Naive thymus-derived CD4-positive, alpha-beta T cell (primary cell): ENCODE measurements at regions of chr16 and their contacts with region 1.

Region 1: DNA sequence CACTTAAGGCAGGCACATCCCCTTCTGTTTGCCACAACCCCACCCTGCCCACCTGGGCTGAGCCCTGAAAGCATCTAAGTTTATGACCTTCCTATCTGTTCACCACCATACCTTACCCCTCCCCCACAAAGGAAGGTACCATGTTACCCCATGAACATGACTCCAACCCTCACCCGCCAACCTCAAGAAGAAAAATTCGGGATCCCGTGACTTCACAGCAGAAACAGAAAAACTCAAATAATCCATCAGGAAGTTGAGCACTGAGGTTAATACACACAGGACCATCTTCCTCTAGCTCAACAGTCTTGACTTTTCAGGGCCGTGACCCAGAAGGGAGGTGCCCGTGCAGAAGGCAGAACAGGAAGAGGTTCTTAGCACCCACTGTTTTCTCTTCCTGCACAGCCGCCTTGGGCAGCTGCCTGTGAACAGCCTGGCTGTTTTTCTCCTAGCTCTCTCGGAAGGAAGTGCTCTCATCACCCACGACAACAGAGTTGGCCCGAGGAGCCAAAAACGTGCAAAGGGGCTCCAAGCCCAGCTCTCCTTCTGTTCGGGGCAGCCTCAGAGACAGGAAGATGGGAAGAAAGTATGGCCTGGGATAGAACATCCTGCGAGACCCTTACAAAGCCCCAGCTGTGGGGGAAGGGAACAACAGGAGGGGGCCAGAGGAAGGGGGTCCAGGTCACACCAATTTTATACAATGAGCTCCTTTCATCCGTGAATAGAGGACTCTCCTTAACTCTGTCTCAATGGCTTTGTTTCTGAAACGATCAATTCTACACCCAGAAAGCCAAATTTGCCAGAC is 101.1 kb downstream of the XYLT1 start:
- DNase-seq: peak; percentile 45 to 88 (median 84)
- ATAC-seq: peak; percentile 91
- H3K4me3 ChIP-seq: peak overlapping the region; percentile 65
- H3K4me3 Mint-ChIP-seq: peak overlapping the region; percentile 77 to 96 (median 92)
- H3K27ac ChIP-seq: peak overlapping the region; percentile 70
- H3K27ac Mint-ChIP-seq: peak overlapping the region; percentile 96 to 100 (median 99)
- H3K4me1 ChIP-seq: peaks cover 78 to 81% of the 10 kb centered on the region in 2 donors
- H3K4me1 Mint-ChIP-seq: peaks cover 64 to 99% (median 92%) of the 10 kb centered on the region in 7 donors
- H3K27me3 ChIP-seq: no peaks in the 10 kb centered on the region
- H3K27me3 Mint-ChIP-seq: no peaks in the 10 kb centered on the region

Region 2: GRCh38 chr16:16861546-16861945 is 508.1 kb before region 1 on chr16:
- CTCF ChIA-PET with region 1: no interaction called
- POLR2A ChIA-PET with region 1: no interaction called
- intact Hi-C with region 1: loop called in 1 of 2 experiments (anchors 10 kb)
- DNase-seq: peak; percentile 15 to 63 (median 50)
- ATAC-seq: no peak
- H3K4me3 ChIP-seq: no peak overlapping the region
- H3K4me3 Mint-ChIP-seq: no peak overlapping the region
- H3K27ac ChIP-seq: no peak overlapping the region
- H3K27ac Mint-ChIP-seq: peak overlapping the region in 1 of 9 donors; percentile 13
- H3K4me1 ChIP-seq: no peaks in the 10 kb centered on the region
- H3K4me1 Mint-ChIP-seq: peaks cover 0 to 3% (median 0%) of the 10 kb centered on the region in 7 donors
- H3K27me3 ChIP-seq: no peaks in the 10 kb centered on the region
- H3K27me3 Mint-ChIP-seq: peaks cover 2 to 17% (median 10%) of the 10 kb centered on the region in 5 donors

Region 3: DNA sequence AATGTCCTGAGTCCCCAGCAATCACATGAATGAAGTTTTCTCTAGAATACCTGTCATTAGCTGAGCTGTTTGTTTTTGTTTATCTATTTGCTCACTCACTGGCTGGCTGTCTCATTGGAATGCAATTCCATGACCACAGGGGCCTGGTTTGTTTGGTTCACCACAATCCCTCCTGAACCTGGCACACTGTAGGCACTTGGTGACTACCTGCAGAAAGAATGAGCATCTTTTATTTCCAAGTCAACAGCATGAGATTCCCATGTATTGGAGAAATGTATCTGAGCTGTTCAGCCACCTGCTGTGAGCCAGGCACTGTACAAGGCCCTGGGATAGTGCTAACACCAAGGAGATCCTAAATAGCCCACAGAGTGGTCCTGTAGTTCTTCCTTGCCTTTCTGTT is 244.0 kb before region 1 on chr16:
- CTCF ChIA-PET with region 1: no interaction called
- POLR2A ChIA-PET with region 1: no interaction called
- intact Hi-C with region 1: no loop called
- DNase-seq: no peak
- ATAC-seq: no peak
- H3K4me3 ChIP-seq: no peak overlapping the region
- H3K4me3 Mint-ChIP-seq: no peak overlapping the region
- H3K27ac ChIP-seq: no peak overlapping the region
- H3K27ac Mint-ChIP-seq: no peak overlapping the region
- H3K4me1 ChIP-seq: no peaks in the 10 kb centered on the region
- H3K4me1 Mint-ChIP-seq: peaks cover 2 to 16% (median 4%) of the 10 kb centered on the region in 7 donors
- H3K27me3 ChIP-seq: no peaks in the 10 kb centered on the region
- H3K27me3 Mint-ChIP-seq: no peaks in the 10 kb centered on the region

Region 4: GRCh38 chr16:17277977-17278381 is 91.6 kb before region 1 on chr16:
- CTCF ChIA-PET with region 1: interaction called, 5 read pairs
- POLR2A ChIA-PET with region 1: interaction called, 3 read pairs
- intact Hi-C with region 1: loop called in 1 of 2 experiments (anchors 5 kb)
- DNase-seq: peak in 1 of 9 donors; percentile 11
- ATAC-seq: peak; percentile 34
- H3K4me3 ChIP-seq: no peak overlapping the region
- H3K4me3 Mint-ChIP-seq: no peak overlapping the region
- H3K27ac ChIP-seq: no peak overlapping the region
- H3K27ac Mint-ChIP-seq: peak overlapping the region in 2 of 9 donors; percentile 10 to 33
- H3K4me1 ChIP-seq: peaks cover 0 to 23% of the 10 kb centered on the region in 2 donors
- H3K4me1 Mint-ChIP-seq: peaks cover 29 to 71% (median 57%) of the 10 kb centered on the region in 7 donors
- H3K27me3 ChIP-seq: no peaks in the 10 kb centered on the region
- H3K27me3 Mint-ChIP-seq: no peaks in the 10 kb centered on the region

Region 5: GRCh38 chr16:17382949-17383863 is 13.6 kb after region 1 on chr16:
- CTCF ChIA-PET with region 1: interaction called, 5 read pairs
- POLR2A ChIA-PET with region 1: interaction called, 14 read pairs
- intact Hi-C with region 1: loop called in 1 of 2 experiments (anchors 1 kb)
- DNase-seq: no peak
- ATAC-seq: peak; percentile 28
- H3K4me3 ChIP-seq: no peak overlapping the region
- H3K4me3 Mint-ChIP-seq: peak overlapping the region; percentile 30 to 81 (median 59)
- H3K27ac ChIP-seq: no peak overlapping the region
- H3K27ac Mint-ChIP-seq: peak overlapping the region in 7 of 9 donors; percentile 29 to 86 (median 71)
- H3K4me1 ChIP-seq: peaks cover 18 to 37% of the 10 kb centered on the region in 2 donors
- H3K4me1 Mint-ChIP-seq: peaks cover 48 to 89% (median 81%) of the 10 kb centered on the region in 7 donors
- H3K27me3 ChIP-seq: no peaks in the 10 kb centered on the region
- H3K27me3 Mint-ChIP-seq: no peaks in the 10 kb centered on the region

Region 6: GRCh38 chr16:17529982-17530765 is 160.6 kb after region 1 on chr16:
- CTCF ChIA-PET with region 1: interaction called, 5 read pairs
- POLR2A ChIA-PET with region 1: interaction called, 4 read pairs
- intact Hi-C with region 1: loop called (anchors 2 kb)
- DNase-seq: peak; percentile 11 to 71 (median 54)
- ATAC-seq: peak; percentile 85
- H3K4me3 ChIP-seq: peak overlapping the region; percentile 97
- H3K4me3 Mint-ChIP-seq: peak overlapping the region; percentile 78 to 95 (median 89)
- H3K27ac ChIP-seq: peak overlapping the region; percentile 52
- H3K27ac Mint-ChIP-seq: peak overlapping the region; percentile 90 to 98 (median 93)
- H3K4me1 ChIP-seq: peaks cover 4 to 6% of the 10 kb centered on the region in 2 donors
- H3K4me1 Mint-ChIP-seq: peaks cover 8 to 36% (median 25%) of the 10 kb centered on the region in 7 donors
- H3K27me3 ChIP-seq: no peaks in the 10 kb centered on the region
- H3K27me3 Mint-ChIP-seq: peaks cover 0 to 4% (median 0%) of the 10 kb centered on the region in 5 donors